Activated CD8-positive, alpha-beta T cell treated with anti-CD3 and anti-CD28 coated beads for 36 hours (primary cell): ENCODE measurements at regions of chr3 and their contacts with region 1.

Region 1: GRCh38 chr3:56988458-56989168 is 71.9 kb upstream of the SPATA12 start:
- DNase-seq: peak; percentile 79
- ATAC-seq: peak; percentile 57
- H3K4me3 Mint-ChIP-seq: no peak overlapping the region
- H3K27ac Mint-ChIP-seq: no peak overlapping the region
- H3K4me1 Mint-ChIP-seq: peaks cover 33% of the 10 kb centered on the region
- H3K27me3 Mint-ChIP-seq: peaks cover 7% of the 10 kb centered on the region
- CTCF ChIP-seq: peak; percentile 99

Region 2: DNA sequence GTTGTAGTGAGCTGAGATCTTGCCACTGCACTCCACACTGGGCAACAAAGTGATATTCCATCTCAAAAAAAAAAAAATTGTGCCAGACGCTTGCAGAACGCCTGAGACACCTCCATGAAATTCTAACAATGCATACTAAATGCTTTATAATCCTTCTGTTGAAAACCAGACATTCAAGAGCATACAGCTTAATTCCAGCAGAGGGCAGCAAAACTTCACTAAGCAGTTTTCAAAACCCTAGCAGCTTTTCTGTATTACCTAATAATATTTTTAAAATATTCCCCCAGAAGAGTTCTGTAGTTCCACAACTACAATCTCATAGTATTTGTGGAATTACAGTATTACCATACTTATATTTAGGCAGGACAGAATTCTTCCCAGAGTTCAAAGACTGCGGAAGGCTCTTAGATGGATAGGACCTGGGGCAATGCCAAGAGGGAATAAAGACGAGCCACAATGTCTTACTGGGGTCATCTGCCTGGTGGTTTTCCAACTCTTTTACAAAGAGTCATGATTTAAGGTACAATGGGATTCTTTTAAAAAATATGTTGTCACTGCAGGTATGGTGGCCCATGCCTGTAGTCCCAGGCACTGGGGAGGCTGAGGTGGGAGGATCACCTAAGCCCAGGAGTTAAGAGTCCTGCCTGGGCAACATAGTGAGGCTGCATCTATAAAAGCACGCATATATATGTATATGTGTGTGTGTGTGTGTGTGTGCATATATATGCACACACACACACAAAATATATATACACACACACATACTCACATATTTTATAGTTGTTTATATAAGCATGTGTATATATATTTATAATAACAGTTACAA is 285.9 kb before region 1 on chr3:
- CTCF ChIA-PET with region 1: interaction called, 203 read pairs
- POLR2A ChIA-PET with region 1: interaction called, 4 read pairs
- intact Hi-C with region 1: loop called (anchors 2 kb)
- DNase-seq: peak; percentile 68
- ATAC-seq: peak; percentile 65
- H3K4me3 Mint-ChIP-seq: no peak overlapping the region
- H3K27ac Mint-ChIP-seq: no peak overlapping the region
- H3K4me1 Mint-ChIP-seq: peaks cover 22% of the 10 kb centered on the region
- H3K27me3 Mint-ChIP-seq: no peaks in the 10 kb centered on the region
- CTCF ChIP-seq: peak; percentile 96

Region 3: GRCh38 chr3:56758539-56758981 is 230.1 kb before region 1 on chr3:
- CTCF ChIA-PET with region 1: interaction called, 11 read pairs
- POLR2A ChIA-PET with region 1: no interaction called
- intact Hi-C with region 1: no loop called
- DNase-seq: peak; percentile 74
- ATAC-seq: peak; percentile 74
- H3K4me3 Mint-ChIP-seq: peak overlapping the region; percentile 52
- H3K27ac Mint-ChIP-seq: peak overlapping the region; percentile 93
- H3K4me1 Mint-ChIP-seq: peaks cover 86% of the 10 kb centered on the region
- H3K27me3 Mint-ChIP-seq: no peaks in the 10 kb centered on the region
- CTCF ChIP-seq: no peak

Region 4: GRCh38 chr3:56849698-56850097 is 138.9 kb before region 1 on chr3:
- CTCF ChIA-PET with region 1: interaction called, 13 read pairs
- POLR2A ChIA-PET with region 1: no interaction called
- intact Hi-C with region 1: no loop called
- DNase-seq: no peak
- ATAC-seq: no peak
- H3K4me3 Mint-ChIP-seq: no peak overlapping the region
- H3K27ac Mint-ChIP-seq: no peak overlapping the region
- H3K4me1 Mint-ChIP-seq: peaks cover 27% of the 10 kb centered on the region
- H3K27me3 Mint-ChIP-seq: no peaks in the 10 kb centered on the region
- CTCF ChIP-seq: no peak

Region 5: GRCh38 chr3:56878074-56878473 is 110.5 kb before region 1 on chr3:
- CTCF ChIA-PET with region 1: interaction called, 16 read pairs
- POLR2A ChIA-PET with region 1: no interaction called
- intact Hi-C with region 1: no loop called
- DNase-seq: peak; percentile 86
- ATAC-seq: peak; percentile 85
- H3K4me3 Mint-ChIP-seq: peak overlapping the region; percentile 64
- H3K27ac Mint-ChIP-seq: peak overlapping the region; percentile 97
- H3K4me1 Mint-ChIP-seq: peaks cover 88% of the 10 kb centered on the region
- H3K27me3 Mint-ChIP-seq: no peaks in the 10 kb centered on the region
- CTCF ChIP-seq: no peak

Region 6: GRCh38 chr3:57007513-57008460 is 19.2 kb after region 1 on chr3:
- CTCF ChIA-PET with region 1: interaction called, 36 read pairs
- POLR2A ChIA-PET with region 1: no interaction called
- intact Hi-C with region 1: no loop called
- DNase-seq: peak; percentile 45
- ATAC-seq: peak; percentile 88
- H3K4me3 Mint-ChIP-seq: no peak overlapping the region
- H3K27ac Mint-ChIP-seq: peak overlapping the region; percentile 50
- H3K4me1 Mint-ChIP-seq: peaks cover 8% of the 10 kb centered on the region
- H3K27me3 Mint-ChIP-seq: peaks cover 2% of the 10 kb centered on the region
- CTCF ChIP-seq: no peak

Region 7: DNA sequence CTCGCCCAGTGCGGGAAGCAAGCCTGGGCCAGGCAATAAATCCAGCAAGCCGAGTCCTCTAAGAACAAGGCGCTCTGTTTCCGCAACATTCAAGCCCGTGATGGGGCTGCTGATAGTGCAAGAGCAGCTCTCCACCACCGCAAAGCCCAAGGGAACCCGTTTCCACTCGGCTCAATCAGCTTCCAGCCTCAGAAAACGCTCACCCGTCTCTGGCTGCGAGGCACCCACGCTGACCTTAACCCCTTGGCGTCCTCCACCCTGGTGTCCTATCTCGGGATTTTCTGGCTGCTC is 89.7 kb after region 1 on chr3:
- CTCF ChIA-PET with region 1: no interaction called
- POLR2A ChIA-PET with region 1: no interaction called
- intact Hi-C with region 1: no loop called
- DNase-seq: peak; percentile 46
- ATAC-seq: peak; percentile 50
- H3K4me3 Mint-ChIP-seq: peak overlapping the region; percentile 42
- H3K27ac Mint-ChIP-seq: no peak overlapping the region
- H3K4me1 Mint-ChIP-seq: peaks cover 7% of the 10 kb centered on the region
- H3K27me3 Mint-ChIP-seq: peaks cover 54% of the 10 kb centered on the region
- CTCF ChIP-seq: no peak

Region 8: DNA sequence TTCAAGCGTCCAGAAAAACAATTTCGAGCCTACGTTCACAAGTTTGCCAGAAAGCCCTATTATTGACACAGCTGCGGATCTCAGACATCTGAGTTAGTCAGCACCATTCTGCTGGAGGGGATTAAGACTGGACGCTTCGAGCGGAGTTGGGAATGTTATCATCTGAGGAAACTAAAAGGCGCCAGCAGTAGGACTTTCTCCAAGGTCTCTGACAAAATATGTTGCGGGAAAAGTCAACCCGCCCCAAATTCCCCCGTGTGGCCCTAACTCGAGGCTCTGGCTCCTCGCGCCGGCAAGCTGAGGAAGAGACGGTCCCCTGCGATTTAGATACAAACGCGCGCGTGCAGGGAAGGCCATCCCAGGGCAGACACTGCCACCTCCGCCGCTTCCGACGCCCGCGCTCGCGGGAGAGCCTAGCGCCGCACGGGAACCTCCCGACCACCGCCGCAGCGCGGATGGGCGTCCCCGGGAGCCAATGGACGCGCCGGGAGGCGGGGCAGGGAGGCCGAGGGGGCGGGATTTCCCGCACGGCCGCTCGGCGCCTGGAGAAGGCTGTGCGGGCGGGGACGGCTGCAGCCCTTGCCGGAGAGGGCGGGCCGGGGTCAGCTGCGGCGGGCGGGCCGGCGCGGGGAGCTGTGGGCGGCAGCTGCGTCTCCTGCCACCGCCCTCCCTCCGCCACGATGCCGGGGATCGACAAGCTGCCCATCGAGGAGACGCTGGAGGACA is 238.8 kb after region 1 on chr3 and contains the start of gene APPL1:
- CTCF ChIA-PET with region 1: no interaction called
- POLR2A ChIA-PET with region 1: no interaction called
- intact Hi-C with region 1: no loop called
- DNase-seq: peak; percentile 89
- ATAC-seq: peak; percentile 96
- H3K4me3 Mint-ChIP-seq: peak within 1 kb of the TSS; percentile 85
- H3K27ac Mint-ChIP-seq: peak within 1 kb of the TSS; percentile 79
- H3K4me1 Mint-ChIP-seq: peaks cover 30% of the 10 kb centered on the region
- H3K27me3 Mint-ChIP-seq: no peaks in the 10 kb centered on the region
- CTCF ChIP-seq: no peak
- total RNA-seq, gene APPL1: 35.1 to 42.3 TPM